ENCODE measurements at regions of chr16 and their contacts with region 1.

Region 1: DNA sequence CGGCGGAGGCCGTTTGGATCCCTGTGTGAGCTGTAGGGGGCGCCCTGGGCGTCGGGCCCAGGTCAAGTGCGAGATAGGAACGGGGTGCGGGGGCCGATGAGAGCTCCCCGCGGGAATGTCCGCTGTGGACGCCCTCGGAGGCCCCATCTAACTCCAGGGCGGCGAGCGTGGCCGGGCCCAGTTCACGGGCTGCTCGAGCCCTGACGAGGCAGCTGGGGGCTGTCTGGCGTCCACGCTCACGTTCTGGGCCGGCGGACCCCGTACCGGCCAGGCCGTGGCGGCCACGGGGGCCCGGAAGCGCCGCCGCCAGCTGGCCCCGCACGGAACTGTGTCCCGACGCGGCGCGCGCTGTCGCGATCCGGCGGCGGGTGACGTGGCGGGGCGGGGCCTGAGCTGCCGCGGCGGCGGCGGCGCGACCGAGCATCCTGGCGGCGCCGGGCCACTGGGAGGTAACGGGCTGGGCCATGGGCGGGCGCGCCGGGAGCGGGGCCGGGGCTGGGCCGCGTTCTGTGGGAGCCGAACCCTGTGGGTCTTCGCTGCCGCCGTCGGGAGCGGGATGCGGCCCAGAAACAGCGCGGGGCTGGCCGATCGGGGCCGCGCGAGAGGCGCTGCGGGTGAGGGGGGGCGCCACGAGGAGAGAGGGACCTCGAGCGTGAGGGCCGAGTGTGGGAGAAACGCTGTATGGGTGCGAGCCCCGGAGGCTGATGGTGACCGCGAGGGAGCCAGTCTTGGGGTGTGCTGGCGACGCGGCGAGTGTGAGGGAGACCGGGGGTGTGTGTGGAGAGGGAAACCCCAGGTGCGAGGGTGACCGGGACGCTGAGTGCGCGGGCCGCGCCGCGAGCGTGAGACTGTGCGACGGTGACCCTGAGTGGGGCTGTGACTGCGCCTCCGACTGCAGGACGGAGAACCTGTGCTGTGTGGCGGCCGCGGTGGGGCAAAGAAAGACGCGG is at the start of gene SLC7A6:
- DNase-seq: peak; percentile 85
- ATAC-seq: peak; percentile 71
- H3K4me3 Mint-ChIP-seq: peak within 1 kb of the TSS; percentile 93
- H3K27ac Mint-ChIP-seq: peak within 1 kb of the TSS; percentile 99
- H3K4me1 Mint-ChIP-seq: peaks cover 53% of the 10 kb centered on the region
- H3K27me3 Mint-ChIP-seq: no peaks in the 10 kb centered on the region
- total RNA-seq, gene SLC7A6: 84.1 to 85.0 TPM

Region 2: DNA sequence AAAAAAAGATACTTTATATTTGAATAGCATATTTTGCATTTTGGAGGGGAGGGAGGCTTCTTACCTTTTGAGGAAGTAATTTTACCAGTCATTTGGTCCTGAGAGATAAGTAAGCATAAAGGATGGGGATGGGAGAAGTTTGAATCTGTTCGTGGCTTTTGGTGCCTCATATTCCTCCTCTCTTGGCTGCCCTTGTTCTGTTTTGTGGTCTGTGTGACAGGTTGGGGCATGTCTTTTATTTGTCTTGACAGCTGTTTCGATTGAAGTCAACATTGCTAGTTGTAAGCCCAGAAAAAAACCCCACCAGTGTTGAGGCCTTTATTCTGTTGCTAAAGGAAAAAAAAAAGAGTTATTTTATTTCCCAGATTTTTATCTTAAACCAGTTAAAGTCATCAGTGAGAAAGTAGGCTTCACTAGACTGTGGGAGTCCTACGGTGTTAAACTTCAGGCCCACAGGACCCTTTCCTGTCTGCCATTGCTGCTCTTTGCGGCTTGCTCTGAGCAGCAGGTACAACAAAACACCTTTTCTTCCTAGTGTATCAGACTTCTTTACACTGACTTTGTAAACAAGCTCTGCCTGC is 11.3 kb after region 1 on chr16:
- CTCF ChIA-PET with region 1: interaction called, 346 read pairs
- POLR2A ChIA-PET with region 1: interaction called, 8 read pairs
- DNase-seq: peak; percentile 67
- ATAC-seq: peak; percentile 82
- H3K4me3 Mint-ChIP-seq: peak overlapping the region; percentile 65
- H3K27ac Mint-ChIP-seq: peak overlapping the region; percentile 89
- H3K4me1 Mint-ChIP-seq: peaks cover 72% of the 10 kb centered on the region
- H3K27me3 Mint-ChIP-seq: no peaks in the 10 kb centered on the region

Region 3: DNA sequence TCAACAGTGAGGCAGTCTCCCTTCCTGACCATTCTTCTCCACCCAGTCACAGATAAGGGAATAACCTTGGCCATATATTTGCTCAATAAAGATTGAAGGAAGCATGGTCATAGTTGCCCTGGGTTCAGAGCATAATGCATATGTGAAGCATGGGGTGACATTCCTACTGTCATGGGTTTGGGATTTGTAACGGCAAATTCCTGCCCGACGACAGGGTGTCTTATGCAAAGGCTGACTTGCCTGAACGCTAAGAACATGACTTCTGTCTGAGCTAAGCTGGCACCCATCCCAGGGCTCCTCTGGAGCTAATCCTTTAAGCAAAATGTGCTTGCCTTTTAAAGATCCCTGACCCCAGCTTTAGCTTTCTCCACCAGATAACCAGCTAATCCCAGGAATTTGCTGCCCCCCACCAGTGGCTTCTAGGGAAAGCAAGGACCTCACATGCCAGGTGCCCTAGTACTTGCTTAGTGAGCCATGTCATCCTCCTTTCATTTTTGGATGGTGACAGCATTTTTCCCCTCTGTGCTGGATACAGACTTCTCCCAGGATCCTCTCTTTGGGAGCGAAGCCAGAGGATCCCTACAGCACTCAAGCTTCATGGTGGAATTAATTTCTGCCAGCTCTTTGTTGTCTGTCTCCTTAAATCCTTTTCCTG is 34.6 kb after region 1 on chr16:
- CTCF ChIA-PET with region 1: interaction called, 104 read pairs
- POLR2A ChIA-PET with region 1: interaction called, 3 read pairs
- DNase-seq: no peak
- ATAC-seq: no peak
- H3K4me3 Mint-ChIP-seq: no peak overlapping the region
- H3K27ac Mint-ChIP-seq: peak overlapping the region; percentile 45
- H3K4me1 Mint-ChIP-seq: peaks cover 7% of the 10 kb centered on the region
- H3K27me3 Mint-ChIP-seq: no peaks in the 10 kb centered on the region

Region 4: DNA sequence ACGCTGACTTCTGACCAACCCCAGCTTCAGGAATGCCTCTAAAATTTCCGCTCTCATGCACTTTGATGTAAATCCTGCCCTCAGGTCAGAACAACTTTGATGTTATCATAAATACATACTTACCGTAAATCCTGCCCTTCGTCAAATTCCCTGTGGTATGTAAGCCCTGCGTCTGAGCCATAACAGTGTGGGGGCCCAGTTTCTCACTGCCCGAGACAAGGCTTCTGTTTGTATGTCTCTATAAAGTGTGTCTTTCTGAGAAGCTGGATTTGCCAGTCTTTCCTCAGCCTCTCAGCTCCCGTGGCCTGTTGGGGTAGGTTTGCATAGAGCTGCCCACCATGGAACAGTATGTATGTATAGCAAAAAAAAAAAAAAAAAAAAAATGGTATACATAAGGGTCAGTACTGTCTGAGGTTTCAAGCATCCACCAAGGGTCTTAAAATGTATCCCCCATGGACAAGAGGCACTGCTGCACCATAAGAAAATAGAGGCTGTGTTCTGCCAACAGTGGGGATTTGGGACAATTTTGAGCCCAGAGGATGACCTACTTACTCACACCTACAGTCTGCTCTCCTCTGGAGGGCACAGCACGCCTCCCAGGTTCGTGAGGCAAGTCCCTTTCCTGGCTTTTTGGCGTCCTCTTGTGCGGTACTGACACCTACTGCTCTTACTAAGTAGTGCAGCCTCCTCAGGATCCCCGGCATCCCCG is 63.9 kb after region 1 on chr16:
- CTCF ChIA-PET with region 1: interaction called, 544 read pairs
- POLR2A ChIA-PET with region 1: interaction called, 14 read pairs
- DNase-seq: peak; percentile 87
- ATAC-seq: peak; percentile 95
- H3K4me3 Mint-ChIP-seq: no peak overlapping the region
- H3K27ac Mint-ChIP-seq: no peak overlapping the region
- H3K4me1 Mint-ChIP-seq: peaks cover 28% of the 10 kb centered on the region
- H3K27me3 Mint-ChIP-seq: no peaks in the 10 kb centered on the region

Region 5: GRCh38 chr16:68356249-68356918 is 92.0 kb after region 1 on chr16:
- CTCF ChIA-PET with region 1: interaction called, 14 read pairs
- POLR2A ChIA-PET with region 1: no interaction called
- DNase-seq: peak; percentile 92
- ATAC-seq: peak; percentile 87
- H3K4me3 Mint-ChIP-seq: peak overlapping the region; percentile 40
- H3K27ac Mint-ChIP-seq: peak overlapping the region; percentile 75
- H3K4me1 Mint-ChIP-seq: peaks cover 48% of the 10 kb centered on the region
- H3K27me3 Mint-ChIP-seq: peaks cover 3% of the 10 kb centered on the region